ENCODE measurements at regions of chr3 and their contacts with region 1.

Region 1: GRCh38 chr3:125585595-125586223 is 9.6 kb downstream of the OSBPL11 start:
- DNase-seq: peak; percentile 70
- H3K4me3 Mint-ChIP-seq: no peak overlapping the region
- H3K27ac Mint-ChIP-seq: no peak overlapping the region
- H3K4me1 Mint-ChIP-seq: peaks cover 20% of the 10 kb centered on the region
- H3K27me3 Mint-ChIP-seq: no peaks in the 10 kb centered on the region

Region 2: DNA sequence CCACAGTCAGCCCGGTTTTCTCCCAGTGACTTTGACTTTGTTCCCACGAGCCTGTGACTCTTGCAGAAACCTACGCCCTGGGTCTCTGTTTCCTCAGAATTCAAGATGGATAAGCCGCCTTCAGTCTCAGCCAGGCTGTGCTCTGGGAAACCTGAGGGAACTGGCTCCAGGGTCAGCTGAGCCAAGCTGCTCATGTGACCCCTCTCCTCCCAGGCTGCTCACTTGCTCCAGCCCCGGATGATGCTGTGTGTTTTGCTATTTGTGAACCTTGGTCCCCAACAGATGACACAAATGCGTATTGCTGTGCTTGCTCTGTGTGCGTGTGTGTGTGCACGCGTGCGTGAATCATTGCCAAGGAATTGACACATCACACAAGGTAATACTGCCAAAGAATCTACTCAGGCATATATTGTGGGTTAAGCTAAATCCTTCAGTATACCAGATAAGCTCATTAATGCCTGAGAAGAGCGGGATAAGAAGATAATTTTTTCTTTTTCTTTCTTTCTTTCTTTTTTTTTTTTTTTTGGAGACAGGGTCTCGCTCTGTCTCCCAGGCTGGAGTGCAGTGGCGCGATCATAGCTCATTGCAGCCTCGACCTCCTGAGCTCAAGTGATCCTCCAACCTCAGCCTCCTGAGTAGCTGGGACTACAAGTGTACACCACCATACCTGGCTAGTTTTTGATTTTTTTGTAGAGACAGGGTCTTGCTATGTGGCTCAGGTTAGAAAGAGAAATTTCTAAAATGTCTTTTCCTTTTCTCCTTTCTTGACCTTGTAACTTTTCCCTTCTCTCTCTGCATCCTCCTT is 884.6 kb before region 1 on chr3:
- CTCF ChIA-PET with region 1: no interaction called
- intact Hi-C with region 1: no loop called
- DNase-seq: no peak
- H3K4me3 Mint-ChIP-seq: no peak overlapping the region
- H3K27ac Mint-ChIP-seq: no peak overlapping the region
- H3K4me1 Mint-ChIP-seq: no peaks in the 10 kb centered on the region
- H3K27me3 Mint-ChIP-seq: peaks cover 6% of the 10 kb centered on the region

Region 3: GRCh38 chr3:124761250-124761796 is 824.4 kb before region 1 on chr3:
- CTCF ChIA-PET with region 1: interaction called, 3 read pairs
- intact Hi-C with region 1: loop called (anchors 2 kb)
- DNase-seq: peak; percentile 87
- H3K4me3 Mint-ChIP-seq: peak overlapping the region; percentile 44
- H3K27ac Mint-ChIP-seq: no peak overlapping the region
- H3K4me1 Mint-ChIP-seq: peaks cover 7% of the 10 kb centered on the region
- H3K27me3 Mint-ChIP-seq: no peaks in the 10 kb centered on the region

Region 4: DNA sequence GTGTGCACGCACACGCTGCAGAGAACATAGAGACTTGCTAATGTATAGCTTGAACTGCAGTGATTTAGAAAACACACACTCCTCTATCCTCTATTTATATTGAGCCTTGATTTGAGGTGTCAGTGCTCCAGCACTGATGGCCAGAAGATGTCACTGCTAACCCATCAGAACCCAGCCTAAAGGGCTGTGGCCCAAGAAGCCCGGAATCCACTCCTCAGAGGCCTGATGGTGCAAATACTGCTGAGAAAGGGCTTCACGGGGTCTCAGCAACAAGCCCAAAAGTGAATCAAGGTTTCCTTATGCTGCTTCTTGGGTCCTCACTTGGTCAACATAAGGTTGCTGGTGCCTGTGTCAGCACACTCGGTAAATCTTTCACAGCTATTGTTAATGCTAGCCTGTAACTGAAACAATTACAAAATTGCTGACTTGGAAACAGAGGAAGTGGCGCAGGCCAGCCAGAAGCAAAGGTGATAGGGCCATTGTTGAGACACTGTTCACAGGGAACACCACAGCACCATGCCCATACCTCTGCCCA is 590.2 kb before region 1 on chr3:
- CTCF ChIA-PET with region 1: interaction called, 7 read pairs
- intact Hi-C with region 1: loop called (anchors 1 kb)
- DNase-seq: peak; percentile 72
- H3K4me3 Mint-ChIP-seq: no peak overlapping the region
- H3K27ac Mint-ChIP-seq: peak overlapping the region; percentile 24
- H3K4me1 Mint-ChIP-seq: peaks cover 3% of the 10 kb centered on the region
- H3K27me3 Mint-ChIP-seq: no peaks in the 10 kb centered on the region

Region 5: GRCh38 chr3:125220727-125221429 is 364.8 kb before region 1 on chr3:
- CTCF ChIA-PET with region 1: no interaction called
- intact Hi-C with region 1: loop called (anchors 10 kb)
- DNase-seq: no peak
- H3K4me3 Mint-ChIP-seq: no peak overlapping the region
- H3K27ac Mint-ChIP-seq: no peak overlapping the region
- H3K4me1 Mint-ChIP-seq: no peaks in the 10 kb centered on the region
- H3K27me3 Mint-ChIP-seq: no peaks in the 10 kb centered on the region

Region 6: GRCh38 chr3:125556314-125556713 is 29.4 kb before region 1 on chr3:
- CTCF ChIA-PET with region 1: interaction called, 10 read pairs
- intact Hi-C with region 1: no loop called
- DNase-seq: no peak
- H3K4me3 Mint-ChIP-seq: no peak overlapping the region
- H3K27ac Mint-ChIP-seq: peak overlapping the region; percentile 18
- H3K4me1 Mint-ChIP-seq: peaks cover 10% of the 10 kb centered on the region
- H3K27me3 Mint-ChIP-seq: no peaks in the 10 kb centered on the region

Region 7: DNA sequence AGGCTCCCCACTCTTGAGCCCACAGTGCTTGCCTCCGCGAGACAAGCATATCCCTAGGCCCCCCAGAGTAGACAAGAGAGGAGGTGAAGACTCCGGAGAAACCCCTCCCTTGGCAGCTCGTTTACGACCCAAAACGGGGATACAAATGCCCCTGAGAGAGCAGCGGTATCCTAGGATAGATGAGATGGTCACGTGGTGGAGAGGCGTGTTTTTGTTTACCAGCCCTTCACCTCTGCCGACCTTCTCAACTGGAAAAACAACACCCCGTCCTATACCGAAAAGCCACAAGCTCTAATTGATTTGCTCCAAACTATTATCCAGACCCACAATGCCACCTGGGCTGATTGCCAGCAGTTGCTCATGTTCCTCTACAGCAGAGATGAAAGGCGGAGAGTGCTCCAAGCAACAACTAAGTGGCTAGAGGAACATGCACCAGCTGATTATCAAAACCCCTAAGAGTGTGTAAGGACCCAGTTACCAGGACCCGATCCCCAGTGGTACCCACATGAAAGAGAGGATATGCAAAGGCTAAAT is 109.1 kb after region 1 on chr3:
- CTCF ChIA-PET with region 1: no interaction called
- intact Hi-C with region 1: no loop called
- DNase-seq: no peak
- H3K4me3 Mint-ChIP-seq: no peak overlapping the region
- H3K27ac Mint-ChIP-seq: no peak overlapping the region
- H3K4me1 Mint-ChIP-seq: no peaks in the 10 kb centered on the region
- H3K27me3 Mint-ChIP-seq: peaks cover 3% of the 10 kb centered on the region